ENCODE measurements at regions of chr4 and their contacts with region 1.

Region 1: DNA sequence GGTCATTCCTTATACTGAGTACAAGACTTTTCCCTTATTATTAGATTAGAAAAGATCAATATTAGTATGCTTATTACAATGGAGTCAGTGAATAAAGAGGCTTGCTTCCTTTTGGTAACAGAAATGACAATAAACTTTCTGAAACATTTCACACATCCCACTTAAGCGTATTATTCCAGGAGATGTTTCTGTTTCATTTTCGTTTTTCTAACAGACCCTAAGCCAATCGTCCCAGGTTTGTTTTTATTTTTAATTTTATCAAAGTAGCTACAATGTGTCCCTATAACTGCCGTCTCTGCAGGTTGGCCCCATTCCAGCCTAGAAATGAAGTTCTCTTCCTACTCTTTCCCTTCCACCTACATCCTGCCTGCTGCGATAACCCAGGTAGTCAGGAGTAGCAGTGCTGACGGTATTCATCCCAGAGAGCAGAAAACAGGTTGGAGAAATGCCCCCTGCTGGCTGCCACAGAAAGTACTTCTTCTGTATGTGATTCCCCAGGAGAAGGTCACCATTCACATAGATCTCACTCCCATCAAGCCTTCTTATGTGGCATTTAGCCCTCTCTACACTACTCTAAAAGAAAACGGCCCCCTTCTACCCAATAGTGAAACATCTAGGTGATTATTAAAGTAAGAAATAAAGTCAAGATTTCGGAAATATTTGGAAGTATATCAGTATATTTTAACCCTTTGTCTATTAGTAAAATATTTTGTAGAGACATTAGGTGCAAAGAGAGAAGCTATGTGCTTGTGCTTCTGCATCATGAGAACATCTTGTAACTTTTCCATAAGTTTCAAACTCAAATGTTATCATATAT is 40.4 kb downstream of the ENPEP start:
- DNase-seq: peak; percentile 55
- H3K4me3 Mint-ChIP-seq: peak overlapping the region; percentile 94
- H3K27ac Mint-ChIP-seq: peak overlapping the region; percentile 46
- H3K4me1 Mint-ChIP-seq: peaks cover 14% of the 10 kb centered on the region
- H3K27me3 Mint-ChIP-seq: peaks cover 2% of the 10 kb centered on the region

Region 2: GRCh38 chr4:109424093-109424841 is 1092.0 kb before region 1 on chr4:
- intact Hi-C with region 1: loop called (anchors 5 kb)
- DNase-seq: no peak
- H3K4me3 Mint-ChIP-seq: no peak overlapping the region
- H3K27ac Mint-ChIP-seq: no peak overlapping the region
- H3K4me1 Mint-ChIP-seq: peaks cover 6% of the 10 kb centered on the region
- H3K27me3 Mint-ChIP-seq: peaks cover 2% of the 10 kb centered on the region

Region 3: GRCh38 chr4:109998867-109999584 is 517.3 kb before region 1 on chr4:
- intact Hi-C with region 1: loop called (anchors 1 kb)
- DNase-seq: no peak
- H3K4me3 Mint-ChIP-seq: no peak overlapping the region
- H3K27ac Mint-ChIP-seq: no peak overlapping the region
- H3K4me1 Mint-ChIP-seq: peaks cover 16% of the 10 kb centered on the region
- H3K27me3 Mint-ChIP-seq: peaks cover 10% of the 10 kb centered on the region

Region 4: DNA sequence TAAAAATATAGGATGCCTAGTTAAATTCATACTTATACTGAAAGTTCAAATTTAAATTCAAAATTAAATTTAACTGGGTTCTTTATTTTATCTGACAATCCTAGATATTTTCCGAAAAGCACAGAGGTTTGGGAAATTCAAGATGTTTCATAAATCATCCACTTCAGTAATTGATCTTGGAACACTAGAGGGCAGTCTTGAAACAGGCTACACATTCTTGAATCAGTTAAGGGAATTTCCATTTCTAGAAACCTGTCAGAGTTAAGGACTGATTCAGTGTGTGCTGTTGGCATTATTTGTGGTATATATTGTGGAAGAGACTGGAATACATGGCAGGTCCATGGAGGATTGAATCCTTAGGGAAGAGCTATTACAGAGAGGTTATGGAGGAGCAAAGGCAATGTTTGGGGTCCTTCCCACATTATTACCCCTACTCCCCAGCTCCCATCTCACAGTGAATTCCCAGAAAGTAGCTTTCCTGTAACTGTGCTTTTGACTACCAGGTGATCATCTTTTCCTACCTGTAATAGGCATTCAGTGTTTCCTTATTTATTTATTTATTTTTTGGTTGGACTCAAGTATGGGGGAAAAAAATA is 510.8 kb before region 1 on chr4:
- intact Hi-C with region 1: loop called (anchors 1 kb)
- DNase-seq: no peak
- H3K4me3 Mint-ChIP-seq: no peak overlapping the region
- H3K27ac Mint-ChIP-seq: no peak overlapping the region
- H3K4me1 Mint-ChIP-seq: peaks cover 13% of the 10 kb centered on the region
- H3K27me3 Mint-ChIP-seq: peaks cover 10% of the 10 kb centered on the region

Region 5: DNA sequence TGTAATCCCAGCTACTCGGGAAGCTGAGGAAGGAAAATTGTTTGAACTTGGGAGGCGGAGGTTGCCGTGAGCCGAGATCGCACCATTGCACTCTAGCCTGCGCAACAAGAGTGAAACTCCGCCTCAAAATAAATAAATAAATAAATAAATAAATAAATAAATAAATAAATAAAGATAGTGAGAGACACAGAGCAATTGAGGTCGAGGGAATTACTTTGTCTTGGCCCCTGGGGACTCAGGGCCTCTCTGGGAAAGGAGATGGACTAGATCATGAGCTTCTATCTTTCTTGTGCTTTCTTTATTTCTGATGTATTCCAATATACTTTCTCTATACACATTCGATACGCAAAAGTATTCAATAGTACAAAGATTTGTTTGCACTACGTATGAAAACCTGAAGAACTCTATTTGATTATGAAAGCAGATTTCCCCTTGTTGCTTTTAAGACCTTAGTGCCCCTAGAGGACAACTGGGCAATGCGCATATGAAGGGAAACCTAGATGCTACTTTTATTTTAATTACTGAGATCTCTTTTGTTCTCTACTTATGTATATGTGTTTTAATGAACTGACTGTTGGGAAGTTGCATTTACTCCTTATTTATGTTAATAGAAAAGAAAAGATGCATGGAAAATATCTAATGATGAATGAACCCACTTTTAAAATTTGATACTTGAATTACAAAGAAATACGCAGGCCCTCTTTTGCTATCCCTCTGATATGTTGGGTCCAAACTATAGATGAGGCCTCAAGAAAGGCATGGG is 305.1 kb before region 1 on chr4:
- intact Hi-C with region 1: loop called (anchors 5 kb)
- DNase-seq: no peak
- H3K4me3 Mint-ChIP-seq: no peak overlapping the region
- H3K27ac Mint-ChIP-seq: no peak overlapping the region
- H3K4me1 Mint-ChIP-seq: peaks cover 2% of the 10 kb centered on the region
- H3K27me3 Mint-ChIP-seq: peaks cover under 1% of the 10 kb centered on the region

Region 6: GRCh38 chr4:110310795-110311194 is 205.5 kb before region 1 on chr4:
- intact Hi-C with region 1: loop called (anchors 1 kb)
- DNase-seq: no peak
- H3K4me3 Mint-ChIP-seq: no peak overlapping the region
- H3K27ac Mint-ChIP-seq: no peak overlapping the region
- H3K4me1 Mint-ChIP-seq: no peaks in the 10 kb centered on the region
- H3K27me3 Mint-ChIP-seq: peaks cover 19% of the 10 kb centered on the region

Region 7: DNA sequence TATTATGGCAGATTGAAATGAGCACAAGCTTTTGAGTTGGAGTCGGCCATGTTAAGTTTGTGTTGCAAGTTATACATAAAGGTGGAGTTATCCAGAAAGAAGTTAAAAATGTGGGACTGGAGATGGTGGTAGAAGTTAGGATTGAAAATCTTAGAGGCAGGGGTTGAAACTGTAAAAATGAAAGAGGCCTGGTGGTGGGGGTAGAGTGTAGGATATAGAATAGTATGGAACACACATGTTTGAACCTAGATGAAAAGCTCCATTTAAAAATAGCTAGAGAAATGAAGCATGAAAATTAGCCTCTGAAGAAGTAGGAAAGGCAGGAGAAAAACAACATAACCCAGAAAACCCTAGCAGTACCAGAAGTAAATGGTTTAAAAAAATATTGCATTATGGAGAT is 172.2 kb before region 1 on chr4:
- intact Hi-C with region 1: loop called (anchors 10 kb)
- DNase-seq: no peak
- H3K4me3 Mint-ChIP-seq: no peak overlapping the region
- H3K27ac Mint-ChIP-seq: no peak overlapping the region
- H3K4me1 Mint-ChIP-seq: peaks cover 6% of the 10 kb centered on the region
- H3K27me3 Mint-ChIP-seq: peaks cover 27% of the 10 kb centered on the region

Region 8: GRCh38 chr4:110454441-110454840 is 61.9 kb before region 1 on chr4:
- intact Hi-C with region 1: no loop called
- DNase-seq: no peak
- H3K4me3 Mint-ChIP-seq: no peak overlapping the region
- H3K27ac Mint-ChIP-seq: no peak overlapping the region
- H3K4me1 Mint-ChIP-seq: no peaks in the 10 kb centered on the region
- H3K27me3 Mint-ChIP-seq: peaks cover 10% of the 10 kb centered on the region